Activated CD8-positive, alpha-beta T cell treated with anti-CD3 and anti-CD28 coated beads, Interleukin-2, amount 10 ng/mL, durations not matched to agents 7 days and 5 days (primary cell): ENCODE measurements at regions of chr4 and their contacts with region 1.

Region 1: DNA sequence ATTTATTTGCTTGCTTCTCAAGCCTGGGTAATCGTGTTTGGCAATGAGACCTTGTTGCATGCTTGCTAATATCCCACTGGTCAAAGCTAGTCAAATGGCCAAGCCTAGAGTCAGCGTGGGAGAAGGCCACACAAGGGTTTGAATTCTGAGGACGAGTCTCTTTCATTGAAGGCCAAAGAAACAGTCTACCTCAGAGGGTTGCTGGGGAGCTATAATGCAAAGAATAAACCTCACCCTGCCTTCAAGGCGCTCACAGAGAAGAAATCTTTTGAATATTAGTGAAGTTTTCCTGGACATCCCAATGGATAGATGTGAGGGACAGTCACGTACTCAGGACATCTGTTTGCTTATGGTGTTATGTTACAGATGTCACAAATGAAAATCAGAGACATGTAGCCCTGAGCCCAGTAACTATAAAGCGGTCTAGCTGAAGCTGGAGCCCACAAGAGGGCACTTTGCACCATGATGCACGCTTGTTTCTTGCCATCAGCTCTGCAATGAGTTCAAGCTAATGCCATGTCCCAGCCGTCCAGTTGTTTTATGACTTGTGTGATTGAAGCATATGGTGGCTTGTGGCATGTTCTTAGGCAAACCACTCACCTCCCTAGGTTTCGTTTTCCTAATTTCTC is 1.1 kb upstream of the TLR3 start:
- DNase-seq: peak; percentile 62
- ATAC-seq: peak; percentile 70
- H3K4me3 Mint-ChIP-seq: peak overlapping the region; percentile 68
- H3K27ac Mint-ChIP-seq: no peak overlapping the region
- H3K4me1 Mint-ChIP-seq: peaks cover 19% of the 10 kb centered on the region
- H3K27me3 Mint-ChIP-seq: peaks cover 4% of the 10 kb centered on the region

Region 2: DNA sequence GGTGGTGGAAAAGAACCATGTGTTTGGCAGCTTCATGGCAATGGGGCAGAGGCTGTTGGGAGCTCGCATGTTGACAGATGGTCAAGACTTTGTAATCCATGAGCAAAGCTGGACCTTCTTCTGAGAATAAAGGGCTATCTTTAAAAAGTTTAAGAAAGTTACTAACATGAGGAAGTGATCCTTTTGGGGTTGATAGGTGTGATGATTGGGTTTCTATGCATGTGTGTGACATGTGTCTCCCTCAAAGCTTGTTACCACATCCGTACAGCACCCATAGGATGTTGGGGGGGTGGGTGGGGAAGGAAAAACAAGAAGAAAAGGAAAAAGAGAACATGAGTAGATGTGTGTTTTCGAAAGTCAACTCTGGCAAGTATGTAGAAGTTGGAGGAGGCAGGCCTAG is 122.0 kb before region 1 on chr4:
- CTCF ChIA-PET with region 1: no interaction called
- POLR2A ChIA-PET with region 1: no interaction called
- DNase-seq: no peak
- ATAC-seq: no peak
- H3K4me3 Mint-ChIP-seq: no peak overlapping the region
- H3K27ac Mint-ChIP-seq: no peak overlapping the region
- H3K4me1 Mint-ChIP-seq: no peaks in the 10 kb centered on the region
- H3K27me3 Mint-ChIP-seq: no peaks in the 10 kb centered on the region

Region 3: GRCh38 chr4:186137196-186137794 is 69.4 kb after region 1 on chr4:
- CTCF ChIA-PET with region 1: interaction called, 34 read pairs
- POLR2A ChIA-PET with region 1: no interaction called
- DNase-seq: no peak
- ATAC-seq: no peak
- H3K4me3 Mint-ChIP-seq: no peak overlapping the region
- H3K27ac Mint-ChIP-seq: no peak overlapping the region
- H3K4me1 Mint-ChIP-seq: peaks cover 2% of the 10 kb centered on the region
- H3K27me3 Mint-ChIP-seq: peaks cover 16% of the 10 kb centered on the region